Heart left ventricle (tissue), 16 donors: ENCODE measurements at regions of chr6 and their contacts with region 1.

Region 1: DNA sequence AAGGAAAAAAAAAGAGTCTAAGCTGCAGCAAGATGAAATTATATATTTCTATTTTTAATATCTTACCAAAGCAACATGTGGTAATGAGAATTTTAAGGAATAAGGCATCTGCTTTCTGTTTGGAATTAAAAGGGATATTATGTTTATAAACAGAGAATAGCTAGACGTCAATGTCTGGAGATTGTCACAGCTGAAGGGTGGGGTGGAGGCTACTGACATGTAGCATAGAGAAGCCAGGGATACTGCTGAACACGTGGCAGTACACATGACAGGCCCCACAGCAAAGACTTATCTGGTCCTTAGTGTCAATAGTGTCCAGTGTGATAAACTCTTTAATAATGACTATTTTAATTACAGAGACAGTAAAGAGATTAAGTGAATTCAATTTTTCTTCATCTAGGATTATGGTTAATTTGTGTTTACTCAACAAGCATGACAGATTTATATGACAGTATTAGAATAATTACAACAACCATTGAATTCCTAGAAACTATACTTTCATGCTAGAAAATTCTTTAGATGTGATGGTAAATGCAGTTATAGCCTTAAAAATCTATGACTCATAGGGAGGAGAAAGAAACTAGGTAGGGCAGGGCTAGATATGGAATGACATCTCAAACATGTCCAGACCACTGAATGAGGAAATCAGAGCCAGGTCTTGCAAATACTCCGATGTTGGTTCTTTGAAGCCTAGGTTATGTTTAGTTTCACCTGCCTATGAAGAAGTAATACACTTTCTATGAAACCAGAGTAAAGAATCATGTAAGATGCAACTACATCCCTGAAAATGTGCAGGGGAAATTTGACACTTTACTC is 399.4 kb downstream of the PHF3 start:
- DNase-seq: no peak
- ATAC-seq: no peak
- H3K4me3 ChIP-seq: no peak overlapping the region
- H3K27ac ChIP-seq: no peak overlapping the region
- H3K4me1 ChIP-seq: no peaks in the 10 kb centered on the region
- H3K27me3 ChIP-seq: no peaks in the 10 kb centered on the region
- CTCF ChIP-seq: no peak
- POLR2A ChIP-seq: no peak

Region 2: GRCh38 chr6:64074981-64075380 is 39.9 kb after region 1 on chr6:
- intact Hi-C with region 1: loop called in 1 of 10 experiments (anchors 5 kb)
- DNase-seq: no peak
- ATAC-seq: no peak
- H3K4me3 ChIP-seq: no peak overlapping the region
- H3K27ac ChIP-seq: no peak overlapping the region
- H3K4me1 ChIP-seq: no peaks in the 10 kb centered on the region
- H3K27me3 ChIP-seq: no peaks in the 10 kb centered on the region
- CTCF ChIP-seq: no peak
- POLR2A ChIP-seq: no peak